ENCODE measurements at regions of chr2 and their contacts with region 1.

Region 1: DNA sequence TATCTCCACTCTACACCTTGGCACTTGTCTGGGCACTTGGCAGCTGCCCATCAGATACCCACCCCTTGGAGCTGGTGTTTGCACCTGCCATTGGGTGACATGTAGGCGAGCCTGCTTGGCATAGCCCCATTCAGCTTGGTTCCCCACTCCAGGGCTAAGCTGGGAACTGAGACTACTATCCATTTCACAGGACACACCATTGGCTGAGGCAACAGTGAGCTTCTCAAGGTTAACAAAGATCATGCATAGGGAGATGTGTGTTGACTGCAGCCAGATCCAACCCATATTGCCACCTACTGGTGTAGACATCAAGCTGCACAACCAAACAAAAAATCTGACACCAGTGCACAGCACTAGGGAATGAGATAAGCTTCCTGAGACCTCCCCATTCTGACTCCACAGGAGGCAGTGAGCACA is 1389.8 kb upstream of the TMEFF2 start:
- DNase-seq: peak; percentile 40
- H3K4me3 Mint-ChIP-seq: no peak overlapping the region
- H3K27ac Mint-ChIP-seq: peak overlapping the region; percentile 2
- H3K4me1 Mint-ChIP-seq: no peaks in the 10 kb centered on the region
- H3K27me3 Mint-ChIP-seq: no peaks in the 10 kb centered on the region
- CTCF ChIP-seq: peak; percentile 53

Region 2: DNA sequence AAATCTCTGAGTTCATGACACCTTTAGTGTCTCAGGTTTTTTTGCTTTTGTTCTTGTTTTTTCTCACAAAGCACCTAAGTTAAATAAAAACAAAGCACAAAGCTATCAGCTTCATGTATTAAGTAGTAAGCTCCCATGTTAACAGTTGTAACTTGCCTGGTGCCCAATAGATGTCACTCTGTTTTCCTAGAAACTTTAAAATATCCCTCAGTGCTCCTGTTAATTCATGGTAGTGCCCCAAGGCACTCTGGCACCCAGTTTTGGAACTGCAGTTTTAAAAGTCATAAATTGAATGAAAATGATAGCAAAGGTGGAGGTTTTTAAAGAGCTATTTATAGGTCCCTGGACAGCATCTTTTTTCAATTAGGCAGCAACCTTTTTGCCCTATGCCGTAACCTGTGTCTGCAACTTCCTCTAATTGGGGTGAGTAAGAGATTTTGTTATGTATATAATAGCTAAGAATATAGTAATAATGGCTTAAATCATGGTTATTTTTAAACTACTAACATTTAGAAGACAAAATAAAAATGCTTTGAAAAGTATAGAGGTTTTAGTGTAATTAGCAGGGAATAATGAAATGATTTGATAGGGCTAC is 834.8 kb before region 1 on chr2:
- CTCF ChIA-PET with region 1: interaction called, 28 read pairs
- POLR2A ChIA-PET with region 1: no interaction called
- intact Hi-C with region 1: loop called (anchors 1 kb)
- DNase-seq: peak; percentile 40
- H3K4me3 Mint-ChIP-seq: no peak overlapping the region
- H3K27ac Mint-ChIP-seq: no peak overlapping the region
- H3K4me1 Mint-ChIP-seq: peaks cover 4% of the 10 kb centered on the region
- H3K27me3 Mint-ChIP-seq: no peaks in the 10 kb centered on the region
- CTCF ChIP-seq: peak; percentile 48

Region 3: GRCh38 chr2:192854706-192855105 is 729.8 kb before region 1 on chr2:
- CTCF ChIA-PET with region 1: no interaction called
- POLR2A ChIA-PET with region 1: no interaction called
- intact Hi-C with region 1: no loop called
- DNase-seq: no peak
- H3K4me3 Mint-ChIP-seq: no peak overlapping the region
- H3K27ac Mint-ChIP-seq: no peak overlapping the region
- H3K4me1 Mint-ChIP-seq: no peaks in the 10 kb centered on the region
- H3K27me3 Mint-ChIP-seq: no peaks in the 10 kb centered on the region
- CTCF ChIP-seq: no peak

Region 4: GRCh38 chr2:193476171-193476800 is 108.2 kb before region 1 on chr2:
- CTCF ChIA-PET with region 1: no interaction called
- POLR2A ChIA-PET with region 1: no interaction called
- intact Hi-C with region 1: no loop called
- DNase-seq: no peak
- H3K4me3 Mint-ChIP-seq: no peak overlapping the region
- H3K27ac Mint-ChIP-seq: no peak overlapping the region
- H3K4me1 Mint-ChIP-seq: no peaks in the 10 kb centered on the region
- H3K27me3 Mint-ChIP-seq: no peaks in the 10 kb centered on the region
- CTCF ChIP-seq: no peak

Measured in MCF 10A (cell line).